Spleen (tissue), 13 donors: ENCODE measurements at regions of chr14 and their contacts with region 1.

Region 1: GRCh38 chr14:60184146-60184904 is 19.1 kb upstream of the DHRS7 start:
- DNase-seq: no peak
- H3K4me3 ChIP-seq: peak overlapping the region; percentile 1 to 64 (median 32)
- H3K27ac ChIP-seq: peak overlapping the region; percentile 14 to 78 (median 70)
- H3K4me1 ChIP-seq: peaks cover 0 to 12% (median 11%) of the 10 kb centered on the region in 6 donors
- H3K27me3 ChIP-seq: no peaks in the 10 kb centered on the region
- CTCF ChIP-seq: peak; percentile 54 to 90 (median 74)
- POLR2A ChIP-seq: no peak

Region 2: DNA sequence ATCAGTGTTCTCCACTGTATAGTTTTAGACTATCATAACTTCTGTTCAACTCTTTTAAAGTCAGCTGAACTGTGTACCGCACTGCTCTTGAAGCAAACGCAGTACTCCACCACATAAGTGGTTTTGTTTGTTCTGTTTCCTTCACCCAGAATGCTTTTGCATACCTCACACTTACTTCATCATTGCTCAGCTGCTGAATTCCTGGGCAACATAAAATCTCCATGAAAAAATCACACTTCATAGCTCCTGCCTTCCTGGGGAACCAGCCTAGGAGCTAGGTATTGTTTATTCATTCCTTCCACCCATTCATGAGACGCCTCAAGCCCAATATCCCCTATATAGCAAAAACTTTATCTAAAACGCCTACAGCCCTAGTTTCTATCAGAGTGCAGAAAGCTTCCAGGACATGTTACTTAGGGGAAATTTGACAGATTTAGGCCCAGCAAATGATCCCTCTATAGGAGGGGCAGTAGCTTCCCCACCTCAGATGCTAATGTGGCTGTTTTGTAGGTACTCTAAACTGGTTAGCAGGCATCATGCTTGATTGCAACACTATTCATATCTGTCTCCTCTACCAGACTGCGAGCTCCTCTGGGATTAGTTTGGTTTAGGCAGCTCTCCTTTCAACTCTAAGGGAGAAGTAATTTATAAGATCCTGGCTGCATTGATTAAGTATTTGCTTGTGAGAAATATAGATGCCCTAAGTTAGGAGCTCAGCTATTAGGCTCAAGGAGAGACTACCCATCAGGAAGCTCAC is 219.9 kb before region 1 on chr14:
- intact Hi-C with region 1: loop called (anchors 5 kb)
- DNase-seq: no peak
- H3K4me3 ChIP-seq: peak overlapping the region in 2 of 8 donors; percentile 47 to 72
- H3K27ac ChIP-seq: peak overlapping the region in 5 of 8 donors; percentile 62 to 89 (median 86)
- H3K4me1 ChIP-seq: peaks cover 0 to 14% (median 9%) of the 10 kb centered on the region in 6 donors
- H3K27me3 ChIP-seq: no peaks in the 10 kb centered on the region
- CTCF ChIP-seq: no peak
- POLR2A ChIP-seq: no peak

Region 3: DNA sequence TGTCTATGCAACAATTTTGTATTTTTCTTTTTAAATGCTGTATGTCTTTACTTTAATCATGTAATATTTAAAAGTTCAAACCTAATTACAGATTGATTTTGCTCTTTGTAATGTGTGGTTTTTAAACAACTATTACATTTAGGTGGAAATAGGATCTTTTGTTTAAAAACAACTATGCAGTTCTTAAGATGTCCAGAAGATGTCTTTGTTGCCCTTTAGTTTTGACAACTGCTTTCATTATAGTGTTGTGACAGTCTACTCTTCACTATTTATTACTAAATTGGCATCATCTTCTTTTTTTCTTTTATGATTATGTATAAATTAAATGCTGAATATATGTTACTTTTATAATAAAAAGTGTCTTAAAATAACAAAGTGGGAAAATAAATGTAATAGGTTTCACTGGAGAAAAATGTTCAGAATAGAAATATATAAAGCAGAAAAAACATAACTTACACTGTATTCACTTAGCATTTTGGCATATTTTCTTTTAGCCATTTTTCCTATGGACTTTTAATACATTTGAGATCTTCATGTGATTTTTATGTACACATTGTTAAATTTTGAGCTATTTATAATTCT is 119.7 kb before region 1 on chr14:
- intact Hi-C with region 1: loop called (anchors 5 kb)
- DNase-seq: no peak
- H3K4me3 ChIP-seq: no peak overlapping the region
- H3K27ac ChIP-seq: no peak overlapping the region
- H3K4me1 ChIP-seq: peaks cover 0 to 5% (median 0%) of the 10 kb centered on the region in 6 donors
- H3K27me3 ChIP-seq: peaks cover 0 to 9% (median 0%) of the 10 kb centered on the region in 7 donors
- CTCF ChIP-seq: peak in 10 of 11 experiments; percentile 35 to 72 (median 59)
- POLR2A ChIP-seq: no peak

Region 4: DNA sequence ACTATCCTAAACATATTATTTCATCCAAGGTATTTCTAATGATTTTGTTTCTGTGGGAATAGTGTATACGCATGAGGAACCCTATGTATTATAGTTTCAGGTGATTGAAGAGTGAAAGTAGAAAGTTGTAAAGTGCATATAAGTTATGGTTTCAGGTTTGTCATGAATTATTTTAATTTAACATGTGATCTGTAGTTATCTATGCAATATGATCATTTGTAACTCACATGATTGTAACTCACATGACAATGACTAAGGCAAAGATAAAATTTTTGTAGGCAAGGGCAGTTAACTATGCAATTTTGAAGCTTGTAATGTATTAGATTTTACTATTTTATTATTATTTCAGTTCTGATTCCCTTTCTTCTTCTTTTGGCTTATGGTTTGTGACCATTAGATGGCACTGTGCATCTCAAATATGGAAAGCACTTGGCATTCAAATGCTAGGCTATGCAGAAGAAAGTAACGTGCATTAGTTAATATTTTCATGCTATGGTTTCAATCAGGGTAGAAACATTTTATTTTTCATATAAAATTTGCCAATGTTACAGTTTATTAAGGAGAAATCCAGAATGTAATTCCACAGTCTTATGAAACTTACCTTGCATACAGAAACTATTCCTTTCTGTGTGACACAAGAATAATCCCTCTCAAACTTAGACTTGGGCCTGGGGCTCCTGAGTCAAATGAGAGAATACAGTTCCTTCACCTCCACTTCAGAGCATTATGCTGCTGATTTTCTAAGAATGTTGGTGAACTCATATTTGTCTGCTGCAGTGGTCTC is 1112.6 kb after region 1 on chr14:
- intact Hi-C with region 1: no loop called
- DNase-seq: no peak
- H3K4me3 ChIP-seq: no peak overlapping the region
- H3K27ac ChIP-seq: no peak overlapping the region
- H3K4me1 ChIP-seq: peaks cover 0 to 15% (median 5%) of the 10 kb centered on the region in 6 donors
- H3K27me3 ChIP-seq: no peaks in the 10 kb centered on the region
- CTCF ChIP-seq: peak; percentile 32 to 75 (median 63)
- POLR2A ChIP-seq: no peak